ENCODE measurements at regions of chr11 and their contacts with region 1.

Region 1: GRCh38 chr11:35815556-35816315 is 128.1 kb upstream of the LDLRAD3 start:
- DNase-seq: peak in 1 of 2 donors; percentile 57
- ATAC-seq: peak in 7 of 8 donors; percentile 67 to 82 (median 73)
- H3K4me3 ChIP-seq: no peak overlapping the region
- H3K27ac ChIP-seq: peak overlapping the region in 3 of 10 donors; percentile 10 to 25 (median 17)
- H3K4me1 ChIP-seq: peaks cover 15 to 60% (median 42%) of the 10 kb centered on the region in 9 donors
- H3K27me3 ChIP-seq: no peaks in the 10 kb centered on the region
- CTCF ChIP-seq: no peak

Region 2: DNA sequence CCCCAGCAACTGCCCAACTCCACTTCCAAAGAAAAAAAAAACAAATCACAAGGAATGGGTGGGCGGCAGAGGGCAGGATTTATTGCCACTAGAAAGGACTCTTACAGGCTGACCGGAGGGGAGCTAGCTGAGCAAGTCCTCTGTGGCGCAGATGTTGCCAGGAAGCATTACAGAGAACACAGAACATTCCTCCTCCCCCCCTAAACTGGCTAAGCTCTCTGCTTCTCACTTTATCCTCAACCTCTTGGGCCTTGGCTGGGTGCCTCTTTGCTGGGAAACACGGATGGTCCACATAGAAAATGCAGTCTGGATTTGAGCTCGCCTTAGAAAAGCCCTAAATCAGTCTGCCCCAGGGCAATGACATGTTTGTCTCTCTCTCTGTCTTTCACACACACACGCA is 210.0 kb before region 1 on chr11:
- intact Hi-C with region 1: loop called in 4 of 10 experiments (anchors 5 to 10 kb)
- DNase-seq: peak; percentile 13 to 40
- ATAC-seq: peak in 5 of 8 donors; percentile 55 to 86 (median 73)
- H3K4me3 ChIP-seq: no peak overlapping the region
- H3K27ac ChIP-seq: no peak overlapping the region
- H3K4me1 ChIP-seq: peaks cover 0 to 15% (median 0%) of the 10 kb centered on the region in 9 donors
- H3K27me3 ChIP-seq: peaks cover 0 to 85% (median 59%) of the 10 kb centered on the region in 7 donors
- CTCF ChIP-seq: no peak

Region 3: GRCh38 chr11:35662649-35663407 is 152.9 kb before region 1 on chr11 and contains the start of gene TRIM44:
- intact Hi-C with region 1: loop called in 3 of 10 experiments (anchors 5 to 10 kb)
- DNase-seq: peak; percentile 87 to 88
- ATAC-seq: peak; percentile 93 to 97 (median 96)
- H3K4me3 ChIP-seq: peak within 1 kb of the TSS; percentile 52 to 93 (median 76)
- H3K27ac ChIP-seq: peak within 1 kb of the TSS; percentile 88 to 99 (median 96)
- H3K4me1 ChIP-seq: peaks cover 0 to 30% (median 19%) of the 10 kb centered on the region in 9 donors
- H3K27me3 ChIP-seq: peaks cover 0 to 2% (median 0%) of the 10 kb centered on the region in 7 donors
- CTCF ChIP-seq: no peak
- total RNA-seq, gene TRIM44: 37.7 to 59.2 (median 46.8) TPM